Vagina (tissue), 2 donors: ENCODE measurements at regions of chr11 and their contacts with region 1.

Region 1: GRCh38 chr11:68257475-68258362 is 14.1 kb downstream of the C11orf24 start:
- DNase-seq: no peak
- H3K4me3 ChIP-seq: no peak overlapping the region
- H3K27ac ChIP-seq: peak overlapping the region; percentile 73
- H3K4me1 ChIP-seq: peaks cover 26% of the 10 kb centered on the region
- H3K27me3 ChIP-seq: no peaks in the 10 kb centered on the region
- CTCF ChIP-seq: peak; percentile 90 to 96 (median 92)
- POLR2A ChIP-seq: no peak

Region 2: GRCh38 chr11:68297812-68298658 is 40.3 kb after region 1 on chr11:
- intact Hi-C with region 1: loop called (anchors 5 kb)
- DNase-seq: no peak
- H3K4me3 ChIP-seq: peak overlapping the region in 1 of 2 donors; percentile 24
- H3K27ac ChIP-seq: no peak overlapping the region
- H3K4me1 ChIP-seq: peaks cover 13% of the 10 kb centered on the region
- H3K27me3 ChIP-seq: no peaks in the 10 kb centered on the region
- CTCF ChIP-seq: peak; percentile 89 to 94 (median 93)
- POLR2A ChIP-seq: no peak

Region 3: GRCh38 chr11:68383976-68384501 is 126.3 kb after region 1 on chr11:
- intact Hi-C with region 1: loop called (anchors 5 kb)
- DNase-seq: no peak
- H3K4me3 ChIP-seq: no peak overlapping the region
- H3K27ac ChIP-seq: no peak overlapping the region
- H3K4me1 ChIP-seq: peaks cover 22% of the 10 kb centered on the region
- H3K27me3 ChIP-seq: no peaks in the 10 kb centered on the region
- CTCF ChIP-seq: peak; percentile 69 to 85 (median 76)
- POLR2A ChIP-seq: no peak

Region 4: GRCh38 chr11:68447015-68447801 is 189.5 kb after region 1 on chr11:
- intact Hi-C with region 1: loop called (anchors 5 kb)
- DNase-seq: no peak
- H3K4me3 ChIP-seq: no peak overlapping the region
- H3K27ac ChIP-seq: no peak overlapping the region
- H3K4me1 ChIP-seq: no peaks in the 10 kb centered on the region
- H3K27me3 ChIP-seq: no peaks in the 10 kb centered on the region
- CTCF ChIP-seq: peak; percentile 80 to 86 (median 85)
- POLR2A ChIP-seq: no peak

Region 5: GRCh38 chr11:68598816-68599653 is 341.3 kb after region 1 on chr11:
- intact Hi-C with region 1: no loop called
- DNase-seq: no peak
- H3K4me3 ChIP-seq: no peak overlapping the region
- H3K27ac ChIP-seq: no peak overlapping the region
- H3K4me1 ChIP-seq: no peaks in the 10 kb centered on the region
- H3K27me3 ChIP-seq: no peaks in the 10 kb centered on the region
- CTCF ChIP-seq: no peak
- POLR2A ChIP-seq: no peak